MCF 10A (cell line): ENCODE measurements at regions of chr17 and their contacts with region 1.

Region 1: DNA sequence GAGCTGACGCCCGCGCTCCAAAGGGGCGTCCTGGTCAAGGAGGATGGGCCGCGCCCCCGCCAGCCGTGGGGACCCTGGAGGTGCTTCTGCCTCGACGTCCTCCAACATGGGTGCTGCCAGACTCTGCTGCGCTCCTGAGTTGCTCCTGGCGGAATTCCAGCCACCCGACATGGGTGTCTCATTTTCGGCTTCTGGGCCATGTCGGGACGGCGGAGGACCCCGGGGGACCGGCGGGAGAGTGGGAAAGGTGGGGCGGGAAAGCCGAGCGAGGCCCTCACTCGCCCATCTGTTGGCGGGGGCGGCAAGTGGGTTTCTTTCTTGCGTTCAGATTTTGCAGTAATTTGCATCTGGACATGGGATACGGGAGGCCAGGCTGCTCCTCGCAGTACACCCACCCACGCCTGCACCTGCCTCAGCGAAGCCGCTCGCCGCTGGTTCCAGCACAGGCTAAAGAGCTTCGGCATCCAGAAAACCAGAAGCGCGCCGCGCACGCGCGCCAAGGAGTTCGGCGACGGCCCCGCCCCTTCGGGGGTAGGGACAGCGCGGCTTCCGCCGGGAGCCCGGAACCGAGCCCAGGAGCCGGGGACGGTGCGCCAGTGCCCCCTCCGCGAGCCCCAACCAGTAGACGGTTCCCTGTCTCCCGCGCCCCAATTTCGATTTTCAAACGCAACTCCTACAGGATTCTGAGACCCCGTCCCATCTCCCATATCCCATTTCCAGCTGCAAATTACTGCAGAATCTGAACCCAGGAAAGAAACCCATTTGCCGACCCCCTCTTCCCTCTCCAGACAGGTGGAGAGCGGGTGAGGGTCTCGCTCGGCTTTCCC is at the start of gene ARMC7:
- DNase-seq: peak; percentile 86
- H3K4me3 Mint-ChIP-seq: peak within 1 kb of the TSS; percentile 78
- H3K27ac Mint-ChIP-seq: peak within 1 kb of the TSS; percentile 39
- H3K4me1 Mint-ChIP-seq: peaks cover 12% of the 10 kb centered on the region
- H3K27me3 Mint-ChIP-seq: no peaks in the 10 kb centered on the region
- CTCF ChIP-seq: no peak
- total RNA-seq, gene ARMC7: 9.3 and 13.3 TPM in 2 replicates

Region 2: GRCh38 chr17:75046582-75047289 is 62.9 kb before region 1 on chr17 and contains the starts of genes ATP5PD and KCTD2:
- CTCF ChIA-PET with region 1: interaction called, 5 read pairs
- POLR2A ChIA-PET with region 1: interaction called, 16 read pairs
- intact Hi-C with region 1: no loop called
- DNase-seq: peak; percentile 96
- H3K4me3 Mint-ChIP-seq: peak within 1 kb of the TSS; percentile 98
- H3K27ac Mint-ChIP-seq: peak within 1 kb of the TSS; percentile 95
- H3K4me1 Mint-ChIP-seq: peaks cover 13% of the 10 kb centered on the region
- H3K27me3 Mint-ChIP-seq: no peaks in the 10 kb centered on the region
- CTCF ChIP-seq: no peak
- total RNA-seq, gene ATP5PD: 362 and 455 TPM in 2 replicates
- total RNA-seq, gene KCTD2: 11.9 and 12.8 TPM in 2 replicates

Region 3: GRCh38 chr17:75087558-75088453 is 21.8 kb before region 1 on chr17 and contains the start of gene SLC16A5:
- CTCF ChIA-PET with region 1: interaction called, 7 read pairs
- POLR2A ChIA-PET with region 1: interaction called, 37 read pairs
- intact Hi-C with region 1: no loop called
- DNase-seq: peak; percentile 95
- H3K4me3 Mint-ChIP-seq: peak within 1 kb of the TSS; percentile 87
- H3K27ac Mint-ChIP-seq: peak within 1 kb of the TSS; percentile 93
- H3K4me1 Mint-ChIP-seq: peaks cover 48% of the 10 kb centered on the region
- H3K27me3 Mint-ChIP-seq: no peaks in the 10 kb centered on the region
- CTCF ChIP-seq: no peak
- total RNA-seq, gene SLC16A5: 26.0 and 33.1 TPM in 2 replicates

Region 4: DNA sequence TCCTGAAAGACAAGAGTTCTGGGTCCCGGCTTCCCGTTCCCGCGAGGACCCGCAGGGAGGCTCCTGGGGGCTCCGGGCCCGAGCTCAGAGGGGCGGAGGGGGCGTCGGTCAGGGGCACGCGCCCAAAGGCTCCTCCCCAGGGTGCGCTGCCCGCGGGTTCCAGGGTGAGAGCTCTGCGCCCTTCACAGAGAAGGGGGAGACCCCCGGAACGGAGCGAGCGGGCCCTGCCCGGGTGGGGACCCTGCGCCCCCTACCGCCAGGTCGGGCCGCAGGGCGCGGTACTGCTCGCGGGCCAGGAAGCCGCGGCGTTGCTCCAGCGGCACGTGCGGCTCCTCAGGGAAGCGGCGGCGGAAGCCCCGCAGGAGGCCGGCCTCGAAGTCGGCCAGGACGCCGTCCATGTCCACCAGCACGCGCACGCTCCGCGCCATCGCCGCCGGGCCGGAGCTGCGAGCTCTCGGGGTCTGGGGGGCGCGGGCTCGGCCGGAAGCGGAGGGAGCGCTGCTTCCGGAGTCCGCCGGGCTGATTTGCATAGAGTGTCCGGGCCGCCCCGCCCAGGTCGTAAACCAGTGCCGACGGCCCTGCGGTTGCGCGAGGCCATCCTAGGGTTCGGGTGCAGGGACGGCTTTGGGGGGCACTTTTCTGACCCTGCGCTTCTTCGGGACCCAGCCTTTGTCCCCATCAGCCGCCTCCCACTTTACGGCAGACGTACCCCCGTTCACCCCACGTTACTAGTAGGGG is 21.8 kb after region 1 on chr17 and contains the start of gene NT5C:
- CTCF ChIA-PET with region 1: interaction called, 100 read pairs
- POLR2A ChIA-PET with region 1: interaction called, 32 read pairs
- intact Hi-C with region 1: loop called (anchors 1 kb)
- DNase-seq: peak; percentile 72
- H3K4me3 Mint-ChIP-seq: peak within 1 kb of the TSS; percentile 84
- H3K27ac Mint-ChIP-seq: peak within 1 kb of the TSS; percentile 63
- H3K4me1 Mint-ChIP-seq: peaks cover 7% of the 10 kb centered on the region
- H3K27me3 Mint-ChIP-seq: no peaks in the 10 kb centered on the region
- CTCF ChIP-seq: peak; percentile 79
- total RNA-seq, gene NT5C: 105 and 113 TPM in 2 replicates

Region 5: GRCh38 chr17:75182569-75183450 is 73.2 kb after region 1 on chr17 and contains the start of gene SUMO2:
- CTCF ChIA-PET with region 1: interaction called, 7 read pairs
- POLR2A ChIA-PET with region 1: interaction called, 10 read pairs
- intact Hi-C with region 1: no loop called
- DNase-seq: peak; percentile 92
- H3K4me3 Mint-ChIP-seq: peak within 1 kb of the TSS; percentile 80
- H3K27ac Mint-ChIP-seq: peak within 1 kb of the TSS; percentile 77
- H3K4me1 Mint-ChIP-seq: peaks cover 20% of the 10 kb centered on the region
- H3K27me3 Mint-ChIP-seq: no peaks in the 10 kb centered on the region
- CTCF ChIP-seq: peak; percentile 20
- total RNA-seq, gene SUMO2: 186 and 194 TPM in 2 replicates

Region 6: DNA sequence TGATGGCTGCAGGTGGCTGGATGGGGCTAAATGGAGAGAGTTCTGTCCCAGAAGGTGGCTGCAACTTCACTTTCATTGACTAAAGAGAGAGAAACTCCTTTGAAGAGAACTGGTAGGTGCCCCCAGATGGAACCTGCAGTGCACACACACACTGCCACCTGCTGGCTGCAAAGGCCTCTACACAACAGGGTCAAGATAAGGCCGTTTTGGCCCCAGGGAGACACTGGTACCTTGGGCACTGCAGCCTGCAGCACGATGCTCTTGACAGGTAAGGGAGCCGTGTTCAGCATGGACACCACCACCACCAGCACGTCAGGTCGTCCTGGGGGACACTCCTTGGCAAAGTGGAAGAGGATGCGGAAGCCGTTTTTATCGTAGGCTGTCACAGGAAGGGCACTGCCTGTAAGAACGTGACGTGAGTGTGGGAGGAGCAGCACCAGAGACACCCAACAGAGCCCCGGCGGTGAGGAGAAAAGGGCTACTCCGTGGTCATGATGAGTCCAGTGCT is 129.1 kb after region 1 on chr17:
- CTCF ChIA-PET with region 1: interaction called, 4 read pairs
- POLR2A ChIA-PET with region 1: interaction called, 3 read pairs
- intact Hi-C with region 1: loop called (anchors 1 kb)
- DNase-seq: peak; percentile 70
- H3K4me3 Mint-ChIP-seq: no peak overlapping the region
- H3K27ac Mint-ChIP-seq: peak overlapping the region; percentile 24
- H3K4me1 Mint-ChIP-seq: peaks cover 5% of the 10 kb centered on the region
- H3K27me3 Mint-ChIP-seq: no peaks in the 10 kb centered on the region
- CTCF ChIP-seq: peak; percentile 85